Naive thymus-derived CD4-positive, alpha-beta T cell (primary cell): ENCODE measurements at regions of chr11 and their contacts with region 1.

Region 1: DNA sequence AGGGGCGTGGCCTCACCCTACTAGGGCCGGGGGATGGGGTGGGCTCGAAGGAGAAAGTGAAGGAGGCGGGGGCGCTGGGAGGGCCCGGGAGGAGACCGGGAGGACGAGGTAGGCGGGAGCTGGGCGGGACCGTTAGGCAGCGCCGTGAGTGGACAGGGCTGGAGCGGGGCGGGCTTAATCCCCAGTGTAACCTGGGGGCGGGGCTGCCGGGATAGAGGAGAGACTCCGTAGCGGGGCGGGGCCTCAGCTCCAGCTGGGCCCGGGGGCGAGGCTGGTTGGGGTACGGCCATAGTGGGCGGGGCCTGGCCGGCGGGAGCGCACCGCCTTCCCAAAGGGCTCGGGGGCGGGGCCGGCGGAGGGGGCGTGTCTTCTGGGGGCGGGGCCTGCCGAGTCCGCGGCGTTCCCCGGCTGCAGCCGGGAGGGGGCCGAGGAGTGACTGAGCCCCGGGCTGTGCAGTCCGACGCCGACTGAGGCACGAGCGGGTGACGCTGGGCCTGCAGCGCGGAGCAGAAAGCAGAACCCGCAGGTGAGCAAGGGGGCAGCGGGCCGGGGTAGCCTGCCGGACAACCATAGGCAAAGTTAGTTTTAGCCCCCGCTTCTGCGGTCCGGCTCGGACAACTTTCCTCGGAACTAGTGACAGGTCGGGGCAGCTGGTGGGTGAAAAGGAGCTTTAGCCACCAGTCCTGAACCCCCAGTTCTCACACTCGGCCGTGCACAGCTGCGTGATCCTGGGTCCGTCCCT is at the start of gene CD82:
- DNase-seq: peak; percentile 86 to 100 (median 92)
- ATAC-seq: peak; percentile 88
- H3K4me3 ChIP-seq: peak within 1 kb of the TSS; percentile 80
- H3K4me3 Mint-ChIP-seq: peak within 1 kb of the TSS; percentile 82 to 92 (median 88)
- H3K27ac ChIP-seq: peak within 1 kb of the TSS; percentile 72
- H3K27ac Mint-ChIP-seq: peak within 1 kb of the TSS; percentile 48 to 90 (median 85)
- H3K4me1 ChIP-seq: peaks cover 46% of the 10 kb centered on the region in 2 donors
- H3K4me1 Mint-ChIP-seq: peaks cover 31 to 69% (median 56%) of the 10 kb centered on the region in 7 donors
- H3K27me3 ChIP-seq: no peaks in the 10 kb centered on the region
- H3K27me3 Mint-ChIP-seq: no peaks in the 10 kb centered on the region
- total RNA-seq, gene CD82: 37.0 to 319 (median 57.2) TPM

Region 2: DNA sequence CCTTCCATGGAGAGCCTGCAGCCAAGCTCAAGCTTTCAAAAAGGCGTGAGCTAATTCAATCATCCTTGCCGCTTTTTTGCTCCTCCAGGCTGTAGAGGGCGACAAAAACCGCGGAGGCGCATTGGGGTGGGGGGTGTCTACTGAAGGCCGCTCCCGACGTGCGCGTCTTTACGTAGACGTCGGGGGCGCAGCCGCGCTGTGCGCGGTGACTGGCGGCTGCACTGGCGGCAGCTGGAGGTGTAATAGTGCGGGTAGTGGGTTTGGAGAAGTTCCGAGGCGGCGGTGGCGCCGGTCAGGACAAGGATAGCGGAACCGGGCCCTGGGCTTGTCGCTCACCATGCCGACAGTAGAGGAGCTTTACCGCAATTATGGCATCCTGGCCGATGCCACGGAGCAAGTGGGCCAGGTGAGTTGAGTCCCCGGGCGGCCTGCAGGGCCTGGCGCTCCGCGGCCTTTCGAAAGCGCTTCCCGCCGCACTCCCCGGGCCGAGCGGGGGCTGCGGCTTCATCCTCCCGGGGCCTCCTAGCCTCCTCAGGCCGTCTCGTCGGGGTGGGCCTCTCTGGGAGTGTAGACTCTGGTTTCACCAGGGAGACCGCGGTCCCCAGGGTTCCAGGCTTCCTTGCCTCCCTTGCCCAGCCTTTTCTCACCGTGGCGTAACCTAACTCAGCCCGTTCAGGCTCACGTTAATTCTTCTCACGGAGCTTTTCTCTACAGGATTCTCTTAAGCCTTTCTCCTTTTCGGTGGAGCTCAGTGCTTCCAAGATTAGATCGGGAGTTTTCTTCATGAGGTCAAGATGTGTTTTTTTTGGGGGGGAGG is 1253.4 kb before region 1 on chr11 and contains the start of gene API5:
- CTCF ChIA-PET with region 1: no interaction called
- POLR2A ChIA-PET with region 1: no interaction called
- intact Hi-C with region 1: loop called in 1 of 2 experiments (anchors 5 kb)
- DNase-seq: peak; percentile 79 to 94 (median 92)
- ATAC-seq: peak; percentile 99
- H3K4me3 ChIP-seq: peak within 1 kb of the TSS; percentile 60
- H3K4me3 Mint-ChIP-seq: peak within 1 kb of the TSS; percentile 90 to 99 (median 98)
- H3K27ac ChIP-seq: peak within 1 kb of the TSS; percentile 89
- H3K27ac Mint-ChIP-seq: peak within 1 kb of the TSS; percentile 86 to 98 (median 96)
- H3K4me1 ChIP-seq: peaks cover 20 to 25% of the 10 kb centered on the region in 2 donors
- H3K4me1 Mint-ChIP-seq: peaks cover 30 to 56% (median 51%) of the 10 kb centered on the region in 7 donors
- H3K27me3 ChIP-seq: no peaks in the 10 kb centered on the region
- H3K27me3 Mint-ChIP-seq: peaks cover 0 to 2% (median 0%) of the 10 kb centered on the region in 5 donors
- total RNA-seq, gene API5: 59.8 to 138 (median 91.2) TPM

Region 3: DNA sequence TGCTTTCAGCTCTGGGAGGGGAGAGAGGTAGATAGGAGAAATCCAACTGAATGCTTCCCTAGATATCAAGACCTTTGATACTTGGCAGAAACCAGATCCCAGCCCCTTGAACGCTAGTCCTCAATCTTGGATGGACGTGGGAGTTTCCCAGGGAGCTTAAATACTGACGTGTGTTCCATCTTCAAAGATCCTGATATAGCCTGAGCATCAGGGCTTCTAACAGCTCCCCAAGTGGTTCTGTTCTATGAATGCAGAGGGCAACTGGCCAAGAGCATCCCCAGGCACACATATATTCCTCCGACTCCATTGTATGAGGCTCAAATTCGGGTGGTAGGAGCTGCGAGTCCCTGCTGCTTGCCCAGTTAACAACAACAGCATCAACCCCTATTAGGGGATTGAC is 508.0 kb before region 1 on chr11:
- CTCF ChIA-PET with region 1: no interaction called
- POLR2A ChIA-PET with region 1: no interaction called
- intact Hi-C with region 1: no loop called
- DNase-seq: no peak
- ATAC-seq: no peak
- H3K4me3 ChIP-seq: no peak overlapping the region
- H3K4me3 Mint-ChIP-seq: no peak overlapping the region
- H3K27ac ChIP-seq: no peak overlapping the region
- H3K27ac Mint-ChIP-seq: no peak overlapping the region
- H3K4me1 ChIP-seq: no peaks in the 10 kb centered on the region
- H3K4me1 Mint-ChIP-seq: no peaks in the 10 kb centered on the region
- H3K27me3 ChIP-seq: no peaks in the 10 kb centered on the region
- H3K27me3 Mint-ChIP-seq: peaks cover 0 to 5% (median 0%) of the 10 kb centered on the region in 5 donors

Region 4: GRCh38 chr11:44530413-44531115 is 34.8 kb before region 1 on chr11:
- CTCF ChIA-PET with region 1: interaction called, 3 read pairs
- POLR2A ChIA-PET with region 1: no interaction called
- intact Hi-C with region 1: loop called in 1 of 2 experiments (anchors 2 kb)
- DNase-seq: no peak
- ATAC-seq: no peak
- H3K4me3 ChIP-seq: no peak overlapping the region
- H3K4me3 Mint-ChIP-seq: peak overlapping the region in 1 of 10 donors; percentile 78
- H3K27ac ChIP-seq: no peak overlapping the region
- H3K27ac Mint-ChIP-seq: peak overlapping the region in 1 of 9 donors; percentile 92
- H3K4me1 ChIP-seq: no peaks in the 10 kb centered on the region
- H3K4me1 Mint-ChIP-seq: peaks cover 0 to 33% (median 8%) of the 10 kb centered on the region in 7 donors
- H3K27me3 ChIP-seq: no peaks in the 10 kb centered on the region
- H3K27me3 Mint-ChIP-seq: peaks cover 0 to 11% (median 3%) of the 10 kb centered on the region in 5 donors

Region 5: GRCh38 chr11:44621140-44621681 is 55.8 kb after region 1 on chr11:
- CTCF ChIA-PET with region 1: interaction called, 379 read pairs
- POLR2A ChIA-PET with region 1: interaction called, 3 read pairs
- intact Hi-C with region 1: loop called in 1 of 2 experiments (anchors 2 kb)
- DNase-seq: peak; percentile 33 to 64 (median 55)
- ATAC-seq: peak; percentile 76
- H3K4me3 ChIP-seq: no peak overlapping the region
- H3K4me3 Mint-ChIP-seq: no peak overlapping the region
- H3K27ac ChIP-seq: no peak overlapping the region
- H3K27ac Mint-ChIP-seq: peak overlapping the region in 1 of 9 donors; percentile 12
- H3K4me1 ChIP-seq: peaks cover 0 to 20% of the 10 kb centered on the region in 2 donors
- H3K4me1 Mint-ChIP-seq: peaks cover 20 to 44% (median 30%) of the 10 kb centered on the region in 7 donors
- H3K27me3 ChIP-seq: no peaks in the 10 kb centered on the region
- H3K27me3 Mint-ChIP-seq: no peaks in the 10 kb centered on the region

Region 6: GRCh38 chr11:44673688-44674087 is 108.3 kb after region 1 on chr11:
- CTCF ChIA-PET with region 1: no interaction called
- POLR2A ChIA-PET with region 1: no interaction called
- intact Hi-C with region 1: no loop called
- DNase-seq: no peak
- ATAC-seq: no peak
- H3K4me3 ChIP-seq: no peak overlapping the region
- H3K4me3 Mint-ChIP-seq: peak overlapping the region in 3 of 10 donors; percentile 52 to 66 (median 65)
- H3K27ac ChIP-seq: no peak overlapping the region
- H3K27ac Mint-ChIP-seq: peak overlapping the region in 5 of 9 donors; percentile 4 to 79 (median 13)
- H3K4me1 ChIP-seq: peaks cover 0 to 1% of the 10 kb centered on the region in 2 donors
- H3K4me1 Mint-ChIP-seq: peaks cover 2 to 44% (median 22%) of the 10 kb centered on the region in 7 donors
- H3K27me3 ChIP-seq: no peaks in the 10 kb centered on the region
- H3K27me3 Mint-ChIP-seq: peaks cover 0 to 14% (median 0%) of the 10 kb centered on the region in 5 donors

Region 7: DNA sequence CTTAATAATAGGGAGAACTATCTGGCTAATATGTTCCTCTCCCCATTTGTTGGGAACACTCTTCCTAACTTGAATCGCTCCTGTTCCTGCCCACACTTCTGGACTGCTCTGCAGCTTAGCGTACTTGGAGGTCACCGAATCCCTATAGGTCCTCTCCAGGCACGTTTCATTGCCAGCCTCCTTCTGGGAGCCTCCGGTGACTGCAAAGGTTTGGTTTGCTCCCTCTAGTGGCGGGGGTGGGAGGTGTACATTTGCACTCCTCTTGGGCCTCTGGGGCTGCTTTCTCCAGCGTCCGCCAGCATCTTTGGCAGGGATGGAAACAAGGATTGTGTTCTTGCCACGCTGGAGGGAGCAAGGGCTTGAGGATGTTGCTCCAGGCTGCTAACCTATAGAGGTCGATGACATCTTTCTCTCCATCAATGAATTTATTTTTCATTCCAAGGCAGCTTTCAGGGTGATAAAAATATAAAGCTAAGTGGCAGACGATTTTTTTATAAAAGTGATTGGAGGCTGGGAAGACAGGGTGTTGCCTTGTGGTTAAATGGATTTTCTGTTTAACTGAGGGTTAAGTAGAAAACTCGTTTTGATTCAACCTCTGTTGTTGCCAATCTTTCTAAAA is 210.1 kb after region 1 on chr11:
- CTCF ChIA-PET with region 1: interaction called, 5 read pairs
- POLR2A ChIA-PET with region 1: no interaction called
- intact Hi-C with region 1: loop called in 1 of 2 experiments (anchors 2 kb)
- DNase-seq: peak; percentile 34 to 68 (median 49)
- ATAC-seq: peak; percentile 78
- H3K4me3 ChIP-seq: no peak overlapping the region
- H3K4me3 Mint-ChIP-seq: peak overlapping the region in 1 of 10 donors; percentile 35
- H3K27ac ChIP-seq: no peak overlapping the region
- H3K27ac Mint-ChIP-seq: peak overlapping the region in 4 of 9 donors; percentile 13 to 72 (median 34)
- H3K4me1 ChIP-seq: peaks cover 0 to 8% of the 10 kb centered on the region in 2 donors
- H3K4me1 Mint-ChIP-seq: peaks cover 5 to 46% (median 32%) of the 10 kb centered on the region in 7 donors
- H3K27me3 ChIP-seq: no peaks in the 10 kb centered on the region
- H3K27me3 Mint-ChIP-seq: no peaks in the 10 kb centered on the region

Region 8: GRCh38 chr11:44842220-44842619 is 276.8 kb after region 1 on chr11:
- CTCF ChIA-PET with region 1: no interaction called
- POLR2A ChIA-PET with region 1: no interaction called
- intact Hi-C with region 1: no loop called
- DNase-seq: no peak
- ATAC-seq: no peak
- H3K4me3 ChIP-seq: no peak overlapping the region
- H3K4me3 Mint-ChIP-seq: no peak overlapping the region
- H3K27ac ChIP-seq: no peak overlapping the region
- H3K27ac Mint-ChIP-seq: no peak overlapping the region
- H3K4me1 ChIP-seq: no peaks in the 10 kb centered on the region
- H3K4me1 Mint-ChIP-seq: peaks cover 0 to 4% (median 0%) of the 10 kb centered on the region in 7 donors
- H3K27me3 ChIP-seq: no peaks in the 10 kb centered on the region
- H3K27me3 Mint-ChIP-seq: peaks cover 0 to 4% (median 0%) of the 10 kb centered on the region in 5 donors

Region 9: DNA sequence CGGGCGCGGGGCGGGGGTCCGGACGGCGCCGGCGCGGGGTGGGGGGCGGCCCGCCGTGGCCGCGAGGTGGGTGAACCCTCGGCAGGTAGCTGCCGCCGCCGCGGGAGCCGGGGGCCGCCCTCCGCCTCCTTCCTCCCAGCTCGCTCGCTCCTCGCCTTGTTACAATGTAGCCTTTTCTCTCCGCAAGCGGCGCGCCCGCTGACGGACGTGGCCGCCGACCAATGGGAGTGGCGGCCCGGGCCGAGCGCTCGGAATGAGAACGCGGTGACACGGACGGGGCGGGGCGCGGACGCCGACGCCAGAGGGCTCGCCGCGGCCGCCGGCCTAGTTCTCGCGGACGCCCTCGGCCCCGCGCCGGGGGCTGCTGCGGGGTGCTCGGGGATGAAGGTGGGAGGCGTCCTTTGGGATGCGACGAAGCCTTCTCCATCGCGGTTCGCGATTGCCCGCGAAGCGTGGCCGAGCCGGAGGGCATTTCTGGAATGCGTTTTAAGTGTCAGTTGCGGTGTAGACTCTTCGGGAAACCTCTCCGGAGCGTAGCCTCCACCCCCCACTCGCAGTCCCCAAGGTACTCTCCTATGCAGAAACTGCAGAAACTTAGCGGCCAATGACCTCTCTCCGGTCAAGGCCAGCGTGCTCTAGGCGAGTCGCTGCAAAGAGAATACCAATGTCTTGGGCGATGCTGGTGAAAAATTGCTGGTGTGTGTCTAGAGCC is 581.8 kb after region 1 on chr11:
- CTCF ChIA-PET with region 1: no interaction called
- POLR2A ChIA-PET with region 1: no interaction called
- intact Hi-C with region 1: loop called (anchors 2 to 5 kb)
- DNase-seq: peak; percentile 86 to 93 (median 91)
- ATAC-seq: peak; percentile 98
- H3K4me3 ChIP-seq: peak overlapping the region; percentile 68
- H3K4me3 Mint-ChIP-seq: peak overlapping the region; percentile 85 to 95 (median 92)
- H3K27ac ChIP-seq: peak overlapping the region; percentile 79
- H3K27ac Mint-ChIP-seq: peak overlapping the region; percentile 47 to 95 (median 87)
- H3K4me1 ChIP-seq: peaks cover 13 to 14% of the 10 kb centered on the region in 2 donors
- H3K4me1 Mint-ChIP-seq: peaks cover 13 to 47% (median 43%) of the 10 kb centered on the region in 7 donors
- H3K27me3 ChIP-seq: no peaks in the 10 kb centered on the region
- H3K27me3 Mint-ChIP-seq: peaks cover 4 to 45% (median 10%) of the 10 kb centered on the region in 5 donors